ENCODE measurements at regions of chr17 and their contacts with region 1.

Region 1: DNA sequence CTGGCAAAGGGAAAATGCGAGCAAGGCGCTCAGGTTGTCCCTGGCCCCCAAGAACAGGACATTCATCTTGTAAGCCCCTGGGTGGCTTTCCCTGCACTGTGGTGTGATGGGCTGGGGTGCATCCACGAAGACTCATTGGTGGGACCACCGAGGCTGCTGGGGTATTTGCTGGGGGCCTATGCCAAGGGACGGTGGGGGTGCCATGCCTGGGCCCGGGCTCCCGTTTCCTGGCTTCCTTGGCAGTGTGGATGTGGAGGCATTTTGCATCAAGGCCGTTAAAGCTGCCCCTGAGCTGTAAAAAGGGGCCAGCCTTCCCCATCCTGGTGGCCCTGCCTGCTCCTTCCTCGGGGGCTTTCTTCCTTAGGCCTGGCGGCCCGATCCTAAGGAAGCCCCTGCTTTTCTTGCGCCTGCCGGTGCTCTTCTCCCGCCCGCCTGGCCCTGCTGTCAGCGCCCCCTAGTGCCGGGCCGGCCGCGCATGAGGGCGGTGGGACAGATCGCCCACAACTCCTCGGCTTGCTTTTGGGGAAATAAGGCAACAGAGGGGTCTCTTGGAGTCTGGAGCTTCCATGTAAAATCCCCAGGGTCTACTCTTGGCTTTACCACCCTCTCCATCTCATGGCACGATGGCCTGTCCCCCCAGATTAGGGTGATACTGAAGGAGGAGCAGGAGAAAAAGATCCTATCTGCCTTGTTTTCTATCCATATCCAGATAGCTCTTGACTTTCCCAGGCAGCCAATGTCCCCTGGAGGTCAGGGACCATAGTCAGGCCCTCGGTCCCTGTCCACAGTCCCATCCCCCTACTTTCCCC is 9.8 kb upstream of the TBX2 start:
- DNase-seq: no peak
- ATAC-seq: no peak
- H3K4me3 ChIP-seq: no peak overlapping the region
- H3K27ac ChIP-seq: peak overlapping the region in 3 of 4 donors; percentile 8 to 48 (median 22)
- H3K4me1 ChIP-seq: peaks cover 0 to 4% of the 10 kb centered on the region in 2 donors
- H3K27me3 ChIP-seq: no peaks in the 10 kb centered on the region
- CTCF ChIP-seq: peak; percentile 47 to 85 (median 75)
- POLR2A ChIP-seq: no peak

Region 2: DNA sequence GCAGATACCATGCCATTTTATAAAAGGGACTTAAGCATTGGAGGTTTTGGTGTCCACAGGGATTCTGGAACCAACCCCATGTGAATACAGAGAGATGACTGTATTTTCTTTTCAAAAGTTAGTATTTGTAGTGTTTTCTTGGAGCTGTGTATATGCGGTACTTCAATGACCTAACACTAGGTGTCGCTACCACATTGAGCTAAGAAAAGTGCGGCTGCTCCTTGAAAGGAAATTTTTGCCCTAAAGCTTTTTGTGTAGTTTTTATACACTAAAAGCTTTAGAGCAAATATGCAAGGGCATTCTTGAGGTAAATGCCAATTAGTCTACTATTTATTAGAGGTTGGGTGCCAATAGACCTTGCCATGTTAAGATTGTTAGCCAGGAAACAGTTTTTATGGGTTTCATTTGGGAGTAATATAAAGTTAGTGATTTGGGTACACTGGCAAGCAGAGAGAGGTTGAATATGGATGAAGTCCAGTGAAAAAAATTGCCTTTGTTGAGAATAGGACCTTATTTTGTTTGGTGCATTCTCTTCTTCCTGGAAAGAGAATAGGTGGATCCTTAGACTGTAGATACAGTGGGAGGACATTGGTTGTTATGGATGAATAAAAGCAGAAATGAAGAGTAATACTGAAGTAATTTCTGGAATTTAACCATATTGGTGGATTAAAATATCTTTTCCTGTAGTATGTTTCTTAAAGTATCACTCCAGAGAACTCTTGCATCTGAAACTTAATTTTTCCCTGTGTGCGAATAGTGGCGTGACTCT is 668.9 kb before region 1 on chr17:
- in situ Hi-C with region 1: loop called (anchors 10 to 25 kb)
- intact Hi-C with region 1: no loop called
- DNase-seq: no peak
- ATAC-seq: peak in 1 of 2 donors; percentile 53
- H3K4me3 ChIP-seq: no peak overlapping the region
- H3K27ac ChIP-seq: no peak overlapping the region
- H3K4me1 ChIP-seq: peaks cover 0 to 3% of the 10 kb centered on the region in 2 donors
- H3K27me3 ChIP-seq: no peaks in the 10 kb centered on the region
- CTCF ChIP-seq: peak; percentile 56 to 88 (median 70)
- POLR2A ChIP-seq: no peak

Region 3: DNA sequence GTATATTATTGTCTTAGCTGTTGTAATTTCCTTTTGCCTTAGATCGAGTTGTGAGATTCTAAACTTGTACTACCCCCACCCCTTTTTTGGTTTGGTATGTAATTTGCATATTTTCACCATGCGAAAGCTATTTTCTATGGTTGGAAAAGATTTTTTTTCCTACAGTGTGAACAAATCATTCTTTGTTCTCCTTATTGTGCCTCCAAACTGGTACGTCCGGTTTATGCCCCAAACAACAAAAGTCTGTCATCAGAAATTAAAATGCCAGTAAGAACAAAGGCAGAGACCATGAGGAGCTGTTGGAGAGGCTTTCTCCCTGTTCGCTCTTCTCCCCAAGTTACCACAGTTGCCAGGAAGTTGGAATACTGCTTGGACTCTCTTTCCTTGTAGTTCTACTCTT is 646.1 kb before region 1 on chr17:
- in situ Hi-C with region 1: loop called in 1 of 4 experiments (anchors 25 kb)
- intact Hi-C with region 1: no loop called
- DNase-seq: no peak
- ATAC-seq: no peak
- H3K4me3 ChIP-seq: no peak overlapping the region
- H3K27ac ChIP-seq: no peak overlapping the region
- H3K4me1 ChIP-seq: peaks cover 0 to 10% of the 10 kb centered on the region in 2 donors
- H3K27me3 ChIP-seq: no peaks in the 10 kb centered on the region
- CTCF ChIP-seq: no peak
- POLR2A ChIP-seq: no peak

Region 4: DNA sequence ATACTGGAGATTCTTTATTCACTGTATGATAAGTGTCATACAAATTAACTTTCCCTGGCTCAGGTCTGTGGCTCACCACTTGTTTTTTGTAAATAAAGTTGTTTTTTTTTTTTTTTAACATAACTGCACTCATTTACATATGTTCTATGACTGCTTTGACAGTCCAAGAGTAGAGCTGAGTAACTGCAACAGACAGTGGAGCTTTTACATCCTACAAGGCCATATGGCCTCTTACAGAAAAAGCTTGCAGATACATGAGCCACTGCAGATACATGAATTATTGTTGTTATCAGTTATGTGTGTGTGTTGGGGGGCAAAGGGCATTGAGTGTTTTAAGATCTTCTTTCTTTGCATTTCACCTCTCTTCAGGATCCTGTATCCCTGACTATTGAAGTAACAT is 400.5 kb before region 1 on chr17:
- in situ Hi-C with region 1: loop called in 1 of 4 experiments (anchors 25 kb)
- intact Hi-C with region 1: no loop called
- DNase-seq: no peak
- ATAC-seq: no peak
- H3K4me3 ChIP-seq: no peak overlapping the region
- H3K27ac ChIP-seq: no peak overlapping the region
- H3K4me1 ChIP-seq: no peaks in the 10 kb centered on the region
- H3K27me3 ChIP-seq: no peaks in the 10 kb centered on the region
- CTCF ChIP-seq: no peak
- POLR2A ChIP-seq: no peak

Region 5: GRCh38 chr17:61002316-61002736 is 387.5 kb before region 1 on chr17:
- in situ Hi-C with region 1: loop called (anchors 25 kb)
- intact Hi-C with region 1: loop called (anchors 5 kb)
- DNase-seq: no peak
- ATAC-seq: no peak
- H3K4me3 ChIP-seq: no peak overlapping the region
- H3K27ac ChIP-seq: no peak overlapping the region
- H3K4me1 ChIP-seq: no peaks in the 10 kb centered on the region
- H3K27me3 ChIP-seq: no peaks in the 10 kb centered on the region
- CTCF ChIP-seq: peak in 4 of 5 experiments; percentile 20 to 45 (median 28)
- POLR2A ChIP-seq: no peak

Region 6: DNA sequence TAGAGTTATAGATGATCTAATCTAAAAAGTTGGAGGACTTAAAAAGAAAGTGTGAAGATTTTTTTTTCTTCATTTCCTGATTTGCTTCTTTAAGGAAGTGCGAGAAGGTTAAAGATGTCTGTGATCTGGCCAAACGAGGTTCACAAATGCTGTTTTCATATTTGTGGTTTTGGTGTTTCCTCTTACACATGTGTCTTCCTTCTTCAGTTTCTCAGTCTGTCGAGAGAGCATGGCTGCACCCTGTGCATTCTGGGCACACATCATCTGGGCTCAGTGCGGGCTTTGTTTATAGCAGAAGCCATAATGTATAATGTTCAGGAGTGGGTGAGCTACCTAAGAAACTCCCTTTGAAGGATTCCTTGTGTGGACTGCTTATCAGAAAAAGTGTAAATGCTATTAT is 250.7 kb before region 1 on chr17:
- in situ Hi-C with region 1: no loop called
- intact Hi-C with region 1: loop called (anchors 10 kb)
- DNase-seq: no peak
- ATAC-seq: no peak
- H3K4me3 ChIP-seq: no peak overlapping the region
- H3K27ac ChIP-seq: no peak overlapping the region
- H3K4me1 ChIP-seq: peaks cover 0 to 4% of the 10 kb centered on the region in 2 donors
- H3K27me3 ChIP-seq: no peaks in the 10 kb centered on the region
- CTCF ChIP-seq: no peak
- POLR2A ChIP-seq: no peak

Region 7: DNA sequence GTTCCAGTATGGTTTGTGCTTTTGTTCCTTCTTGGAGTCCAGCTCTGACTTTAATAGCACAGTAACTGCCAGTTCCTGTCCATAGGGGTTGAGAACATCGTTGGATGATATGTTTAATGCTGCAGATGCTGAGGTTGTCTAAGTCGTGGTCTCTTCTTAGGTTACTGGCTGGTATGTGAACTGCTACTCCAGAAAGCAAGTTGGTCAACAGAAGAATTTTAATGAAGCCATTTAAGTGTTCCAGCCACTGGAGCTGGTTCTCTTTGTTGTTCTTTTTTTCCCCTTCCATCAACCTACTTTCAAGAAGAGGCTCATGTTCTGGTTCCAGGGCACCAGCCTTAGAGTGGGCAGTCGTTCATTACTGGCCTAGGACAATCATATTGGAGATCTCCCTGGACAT is 130.5 kb before region 1 on chr17:
- in situ Hi-C with region 1: no loop called
- intact Hi-C with region 1: loop called (anchors 5 kb)
- DNase-seq: no peak
- ATAC-seq: no peak
- H3K4me3 ChIP-seq: no peak overlapping the region
- H3K27ac ChIP-seq: peak overlapping the region; percentile 63 to 75 (median 68)
- H3K4me1 ChIP-seq: peaks cover 27 to 34% of the 10 kb centered on the region in 2 donors
- H3K27me3 ChIP-seq: no peaks in the 10 kb centered on the region
- CTCF ChIP-seq: no peak
- POLR2A ChIP-seq: no peak

Region 8: GRCh38 chr17:61662741-61663140 is 272.9 kb after region 1 on chr17:
- in situ Hi-C with region 1: no loop called
- intact Hi-C with region 1: no loop called
- DNase-seq: no peak
- ATAC-seq: no peak
- H3K4me3 ChIP-seq: no peak overlapping the region
- H3K27ac ChIP-seq: no peak overlapping the region
- H3K4me1 ChIP-seq: no peaks in the 10 kb centered on the region
- H3K27me3 ChIP-seq: no peaks in the 10 kb centered on the region
- CTCF ChIP-seq: no peak
- POLR2A ChIP-seq: no peak